K562 (cell line): ENCODE measurements at regions of chr1 and their contacts with region 1.

Region 1: GRCh38 chr1:246151796-246152434 is 355.2 kb downstream of the SMYD3 start:
- DNase-seq: peak; percentile 63 to 73 (median 70)
- ATAC-seq: peak; percentile 87
- H3K4me3 ChIP-seq: no peak overlapping the region
- H3K27ac ChIP-seq: peak overlapping the region; percentile 84
- H3K4me1 ChIP-seq: peaks cover 16 to 51% of the 10 kb centered on the region in 2 experiments
- H3K27me3 ChIP-seq: no peaks in the 10 kb centered on the region
- CTCF ChIP-seq: peak; percentile 37 to 47 (median 47); a peak in 5 of 6 replicates
- EP300 ChIP-seq: peak; percentile 4; the same call in 1 of the 2 replicates
- POLR2A ChIP-seq: no peak
- RAD21 ChIP-seq: peak in 1 of 2 experiments; percentile 46; a peak in 2 of 4 replicates

Region 2: GRCh38 chr1:246078126-246078887 is 73.6 kb before region 1 on chr1:
- CTCF ChIA-PET with region 1: no interaction called
- POLR2A ChIA-PET with region 1: no interaction called
- in situ Hi-C with region 1: no loop called
- intact Hi-C with region 1: no loop called
- DNase-seq: peak in 2 of 4 experiments; percentile 21 to 39
- ATAC-seq: peak; percentile 67
- H3K4me3 ChIP-seq: no peak overlapping the region
- H3K27ac ChIP-seq: peak overlapping the region; percentile 58
- H3K4me1 ChIP-seq: peaks cover 0 to 25% of the 10 kb centered on the region in 2 experiments; a peak in 3 of 5 replicates
- H3K27me3 ChIP-seq: no peaks in the 10 kb centered on the region
- CTCF ChIP-seq: no peak
- EP300 ChIP-seq: peak; percentile 29; the same call in 1 of the 2 replicates
- POLR2A ChIP-seq: no peak
- RAD21 ChIP-seq: no peak

Region 3: DNA sequence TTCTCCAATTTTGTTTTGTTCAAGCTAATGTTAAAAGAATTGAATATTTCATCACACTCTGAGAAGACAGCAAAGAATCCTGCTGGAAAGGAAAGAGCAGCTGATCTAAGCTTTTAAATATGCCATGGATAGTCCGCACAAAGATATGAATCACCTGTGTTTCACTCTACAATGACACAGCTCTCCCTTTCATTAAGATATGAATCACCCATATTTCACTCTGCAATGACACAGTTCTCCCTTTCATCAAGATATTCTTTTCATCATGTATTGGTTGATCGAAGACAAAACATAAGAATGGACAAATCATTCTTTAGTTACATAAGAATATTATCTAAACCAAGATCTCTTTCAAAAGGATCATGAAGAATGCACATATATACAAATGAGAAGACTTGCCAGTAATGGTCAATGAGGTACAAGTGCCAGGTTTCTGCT is 12.2 kb before region 1 on chr1:
- CTCF ChIA-PET with region 1: no interaction called
- POLR2A ChIA-PET with region 1: interaction called, 17 read pairs
- in situ Hi-C with region 1: no loop called
- intact Hi-C with region 1: no loop called
- DNase-seq: peak in 3 of 4 experiments; percentile 27 to 37 (median 30)
- ATAC-seq: no peak
- H3K4me3 ChIP-seq: no peak overlapping the region
- H3K27ac ChIP-seq: peak overlapping the region; percentile 16; the same call in 1 of the 3 replicates
- H3K4me1 ChIP-seq: peaks cover 0 to 46% of the 10 kb centered on the region in 2 experiments; a peak in 3 of 5 replicates
- H3K27me3 ChIP-seq: no peaks in the 10 kb centered on the region
- CTCF ChIP-seq: no peak
- EP300 ChIP-seq: peak; percentile 55
- POLR2A ChIP-seq: no peak
- RAD21 ChIP-seq: no peak

Region 4: DNA sequence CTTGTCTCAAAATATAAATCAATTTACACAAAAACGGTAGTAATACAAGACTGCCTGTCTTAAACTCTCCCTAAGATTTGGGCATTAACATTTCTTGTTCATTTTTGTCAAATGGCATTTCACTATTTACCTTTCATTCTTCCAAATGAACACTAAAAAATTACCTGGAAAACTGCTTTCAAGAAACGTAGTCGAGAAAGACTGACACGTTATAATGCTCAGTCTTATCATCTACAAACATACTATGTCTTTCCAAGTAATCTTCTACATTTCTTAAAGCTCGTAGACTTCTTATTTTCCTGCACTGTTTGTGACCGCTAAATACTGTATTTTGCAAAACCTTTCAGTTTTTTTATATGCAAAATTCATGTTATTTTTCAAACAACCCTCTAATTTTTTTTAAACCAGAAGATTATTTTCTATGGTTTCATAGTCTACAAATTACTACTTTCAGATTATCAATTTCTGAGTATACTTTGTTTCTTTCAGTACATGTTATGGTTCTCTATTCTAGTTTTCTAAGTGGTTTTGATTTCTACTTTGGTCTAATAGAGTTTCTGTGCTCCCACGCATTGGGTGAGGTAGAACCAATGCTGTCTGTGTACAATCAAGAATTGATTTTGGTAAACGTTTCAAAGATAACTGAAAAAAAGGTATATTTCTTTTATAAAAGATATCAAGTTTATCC is 18.8 kb after region 1 on chr1:
- CTCF ChIA-PET with region 1: no interaction called
- POLR2A ChIA-PET with region 1: interaction called, 6 read pairs
- in situ Hi-C with region 1: no loop called
- intact Hi-C with region 1: loop called (anchors 1 kb)
- DNase-seq: peak; percentile 45 to 78 (median 58)
- ATAC-seq: peak; percentile 72
- H3K4me3 ChIP-seq: peak overlapping the region; percentile 3; the same call in 1 of the 2 replicates
- H3K27ac ChIP-seq: peak overlapping the region; percentile 78; the same call in 2 of the 3 replicates
- H3K4me1 ChIP-seq: peaks cover 21 to 53% of the 10 kb centered on the region in 2 experiments
- H3K27me3 ChIP-seq: no peaks in the 10 kb centered on the region
- CTCF ChIP-seq: no peak
- EP300 ChIP-seq: peak; percentile 94
- POLR2A ChIP-seq: no peak
- RAD21 ChIP-seq: 0 out of 4 replicates have a peak, but pooled peaks of 1 of the 2 experiments have one; percentile 7